Dendritic cell treated with granulocyte-macrophage colony-stimulating factor and Interleukin-4, amounts not matched to agents 40 ng/mL and 50 ng/mL, for 4 days (primary cell): ENCODE measurements at regions of chr9 and their contacts with region 1.

Region 1: GRCh38 chr9:4339357-4339756 is 39.5 kb upstream of the GLIS3 start:
- H3K4me3 Mint-ChIP-seq: no peak overlapping the region
- H3K27ac Mint-ChIP-seq: no peak overlapping the region
- H3K4me1 Mint-ChIP-seq: no peaks in the 10 kb centered on the region
- H3K27me3 Mint-ChIP-seq: no peaks in the 10 kb centered on the region

Region 2: GRCh38 chr9:4077499-4078102 is 261.8 kb before region 1 on chr9:
- intact Hi-C with region 1: loop called (anchors 5 kb)
- H3K4me3 Mint-ChIP-seq: no peak overlapping the region
- H3K27ac Mint-ChIP-seq: no peak overlapping the region
- H3K4me1 Mint-ChIP-seq: no peaks in the 10 kb centered on the region
- H3K27me3 Mint-ChIP-seq: no peaks in the 10 kb centered on the region

Region 3: DNA sequence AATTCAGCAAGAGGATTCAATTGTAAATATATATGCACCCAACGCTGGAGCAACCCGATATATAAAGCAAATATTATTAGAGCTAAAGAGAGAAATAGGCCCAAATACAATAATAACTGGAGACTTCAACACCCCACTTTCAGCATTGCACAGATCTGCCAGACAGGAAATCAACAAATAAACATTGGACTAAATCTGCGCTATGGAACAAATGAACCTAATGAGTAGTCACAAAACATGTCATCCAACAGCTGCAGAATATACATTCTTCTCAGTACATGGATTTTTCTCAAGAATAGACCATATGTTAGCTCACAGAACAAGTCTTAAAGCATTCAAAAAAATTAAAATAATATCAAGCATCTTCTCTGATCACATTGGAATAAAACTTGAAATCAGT is 64.8 kb after region 1 on chr9:
- intact Hi-C with region 1: no loop called
- H3K4me3 Mint-ChIP-seq: no peak overlapping the region
- H3K27ac Mint-ChIP-seq: no peak overlapping the region
- H3K4me1 Mint-ChIP-seq: no peaks in the 10 kb centered on the region
- H3K27me3 Mint-ChIP-seq: peaks cover 2% of the 10 kb centered on the region

Region 4: DNA sequence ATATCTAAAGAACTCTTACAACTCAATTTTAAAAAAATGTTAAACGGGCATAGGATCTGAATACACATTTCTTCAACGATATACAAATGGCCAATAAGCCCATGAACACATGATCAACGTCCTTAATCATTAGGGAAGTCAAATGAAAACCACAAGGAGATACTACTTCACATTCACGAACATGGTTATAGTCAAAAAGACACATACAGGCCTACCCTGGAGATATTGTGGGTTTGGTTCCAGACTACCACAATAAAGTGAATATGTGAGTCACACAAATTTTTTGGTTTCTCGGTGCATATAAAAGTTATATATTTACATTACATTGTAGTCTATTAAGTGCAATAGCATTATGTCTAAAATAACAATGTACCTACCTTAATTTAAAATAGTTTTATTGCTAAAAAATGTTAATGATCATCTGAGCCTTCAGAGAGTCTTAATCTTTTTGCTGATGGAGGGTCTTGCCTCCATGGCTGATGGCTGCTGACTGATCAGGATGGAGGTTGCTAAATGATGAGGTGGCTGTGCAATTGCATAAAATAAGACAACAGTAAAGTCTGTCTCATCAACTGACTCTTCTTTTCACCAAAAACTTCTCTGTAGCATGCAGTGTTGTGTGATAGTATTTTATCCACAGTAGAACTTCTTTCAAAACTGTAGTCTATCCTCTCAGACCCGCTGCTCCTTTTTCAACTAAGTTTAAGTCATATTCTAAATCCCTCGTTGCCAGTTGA is 386.5 kb after region 1 on chr9:
- intact Hi-C with region 1: no loop called
- H3K4me3 Mint-ChIP-seq: no peak overlapping the region
- H3K27ac Mint-ChIP-seq: no peak overlapping the region
- H3K4me1 Mint-ChIP-seq: no peaks in the 10 kb centered on the region
- H3K27me3 Mint-ChIP-seq: no peaks in the 10 kb centered on the region